Vagina (tissue), 2 donors: ENCODE measurements at regions of chr3 and their contacts with region 1.

Region 1: DNA sequence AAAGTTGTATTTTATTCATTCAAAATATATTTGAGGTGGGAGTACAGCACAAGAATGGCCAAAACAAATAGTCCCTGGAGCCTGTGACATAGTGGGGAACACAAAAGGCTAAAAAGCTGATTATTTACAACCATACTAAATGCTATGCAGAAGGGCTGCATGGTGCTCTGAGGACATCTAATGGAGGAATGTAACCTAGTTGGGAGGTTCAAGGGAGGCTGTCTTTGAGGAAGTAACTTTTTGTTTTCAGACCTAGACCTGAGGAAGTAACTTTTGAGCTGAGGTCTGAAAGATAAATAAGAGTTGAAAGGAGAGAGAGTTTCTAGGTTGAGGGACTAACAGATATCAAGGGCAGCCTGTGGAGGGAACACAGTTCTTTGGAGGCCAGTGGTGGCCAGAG is 34.8 kb upstream of the RASA2 start:
- DNase-seq: no peak
- H3K4me3 ChIP-seq: no peak overlapping the region
- H3K27ac ChIP-seq: peak overlapping the region; percentile 34
- H3K4me1 ChIP-seq: peaks cover 6% of the 10 kb centered on the region
- H3K27me3 ChIP-seq: no peaks in the 10 kb centered on the region
- CTCF ChIP-seq: peak in 1 of 3 experiments; percentile 28
- POLR2A ChIP-seq: no peak

Region 2: DNA sequence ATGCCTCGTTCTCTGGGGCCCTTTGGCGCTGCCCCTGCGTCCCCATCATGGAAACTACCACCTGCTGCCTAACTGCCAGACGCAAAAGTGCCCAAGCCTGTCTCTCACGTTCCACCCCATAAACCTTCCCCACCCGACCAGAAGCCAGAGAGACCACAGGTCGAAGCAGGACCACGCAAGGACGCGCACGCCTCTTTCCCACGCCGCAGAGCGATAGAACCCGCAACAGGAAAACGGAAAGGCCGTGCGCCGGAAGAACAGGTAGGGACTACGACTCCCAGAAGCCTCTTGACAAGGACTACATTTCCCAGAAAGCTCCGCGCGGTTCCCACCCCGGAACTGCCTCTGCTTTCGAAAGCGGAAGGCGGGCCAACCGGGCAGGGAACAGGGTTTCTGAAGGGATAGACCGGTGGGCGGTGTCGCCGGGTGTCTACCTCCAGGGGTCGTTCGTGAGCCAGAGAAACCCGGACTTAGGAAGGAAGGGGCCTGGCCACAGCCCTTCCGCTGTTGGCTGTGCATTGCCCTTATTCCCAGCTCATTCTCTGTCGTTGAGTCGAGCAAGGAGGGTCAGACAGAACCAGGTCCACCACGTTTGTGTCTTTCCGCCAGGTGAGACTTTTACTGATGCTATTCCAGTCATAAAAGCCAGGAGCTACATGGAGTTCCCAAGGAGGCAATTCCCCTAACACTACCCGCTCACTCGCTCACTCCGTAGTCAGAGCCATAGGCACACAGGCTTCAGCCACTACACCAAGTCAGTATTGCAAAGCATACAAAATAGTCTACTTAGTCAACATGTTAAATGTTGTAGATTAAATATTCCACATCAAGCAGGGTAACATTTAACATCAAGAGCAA is 140.3 kb before region 1 on chr3:
- intact Hi-C with region 1: loop called (anchors 5 kb)
- DNase-seq: peak; percentile 98 to 99
- H3K4me3 ChIP-seq: peak overlapping the region; percentile 58 to 60
- H3K27ac ChIP-seq: peak overlapping the region; percentile 85
- H3K4me1 ChIP-seq: peaks cover 14% of the 10 kb centered on the region
- H3K27me3 ChIP-seq: no peaks in the 10 kb centered on the region
- CTCF ChIP-seq: peak; percentile 56 to 65 (median 64)
- POLR2A ChIP-seq: peak in 1 of 2 donors; percentile 27

Region 3: DNA sequence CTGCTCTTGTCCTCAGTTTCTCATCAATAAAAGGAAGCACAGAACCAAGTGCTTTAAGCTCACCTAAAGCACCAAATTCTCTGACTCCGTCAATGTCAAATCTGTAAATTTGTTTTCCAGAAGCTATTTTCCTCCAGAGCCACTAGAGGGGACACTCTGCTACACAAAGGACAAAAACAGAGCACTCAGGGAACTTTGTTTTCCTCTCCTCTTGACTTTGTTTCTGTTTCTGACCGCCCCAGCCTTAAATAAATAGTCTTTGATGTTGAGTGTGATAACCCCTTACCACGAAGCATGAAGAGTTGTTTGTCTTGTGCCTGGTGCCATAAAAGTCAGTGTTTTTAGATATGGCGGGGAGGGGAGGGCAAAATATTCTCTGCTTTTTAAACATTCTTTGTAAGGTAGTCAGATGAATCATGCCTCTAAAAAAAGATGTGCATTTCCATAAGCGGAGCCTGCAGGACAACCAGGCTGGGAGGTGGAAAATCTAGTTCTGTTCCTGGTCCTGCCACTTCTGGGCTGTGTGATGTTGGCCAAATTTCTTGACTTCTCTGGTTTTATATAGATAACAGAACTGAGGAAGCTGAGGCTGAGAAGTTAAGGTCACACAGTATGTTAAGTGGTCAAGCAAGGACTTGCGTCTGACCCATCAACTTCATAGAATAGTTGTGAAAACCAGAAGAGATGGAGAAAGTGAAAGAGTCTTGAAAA is 91.0 kb before region 1 on chr3:
- intact Hi-C with region 1: loop called (anchors 5 kb)
- DNase-seq: no peak
- H3K4me3 ChIP-seq: peak overlapping the region; percentile 17 to 27
- H3K27ac ChIP-seq: peak overlapping the region; percentile 71
- H3K4me1 ChIP-seq: peaks cover 14% of the 10 kb centered on the region
- H3K27me3 ChIP-seq: no peaks in the 10 kb centered on the region
- CTCF ChIP-seq: peak; percentile 61 to 78 (median 62)
- POLR2A ChIP-seq: no peak

Region 4: DNA sequence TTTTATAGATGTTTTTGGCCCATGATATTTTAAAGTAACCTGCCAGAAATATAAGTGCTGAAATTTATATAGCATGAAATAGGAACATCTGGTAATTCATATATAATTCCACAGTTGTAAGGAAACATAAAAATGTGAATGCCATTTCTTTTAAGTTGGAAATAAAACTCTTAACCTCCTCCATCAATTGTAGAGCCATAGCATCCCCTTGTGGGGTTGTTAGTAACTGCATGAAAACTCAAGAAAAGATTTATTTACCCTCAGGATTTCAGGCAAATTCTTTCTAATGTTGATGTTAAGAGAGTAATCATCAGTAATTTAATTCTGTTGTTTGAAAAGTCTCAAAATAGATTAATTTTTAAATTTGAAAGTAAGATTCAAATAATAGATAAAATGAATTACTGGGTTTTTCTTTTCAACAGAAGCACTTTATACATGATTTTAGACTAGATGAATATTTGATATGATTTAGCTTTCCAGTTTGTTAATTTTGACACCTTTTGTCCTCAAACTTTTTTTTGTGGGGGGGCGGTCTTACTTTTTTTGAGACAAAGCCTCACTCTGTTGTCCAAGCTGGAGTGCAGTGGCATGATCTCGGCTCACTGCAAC is 109.5 kb after region 1 on chr3:
- intact Hi-C with region 1: loop called (anchors 5 kb)
- DNase-seq: no peak
- H3K4me3 ChIP-seq: no peak overlapping the region
- H3K27ac ChIP-seq: no peak overlapping the region
- H3K4me1 ChIP-seq: peaks cover 23% of the 10 kb centered on the region
- H3K27me3 ChIP-seq: no peaks in the 10 kb centered on the region
- CTCF ChIP-seq: peak; percentile 91 to 99 (median 92)
- POLR2A ChIP-seq: no peak